ENCODE measurements at regions of chr12 and their contacts with region 1.

Region 1: GRCh38 chr12:49060237-49061156 is at the start of gene KMT2D:
- DNase-seq: peak; percentile 92
- ATAC-seq: peak; percentile 64
- H3K4me3 Mint-ChIP-seq: peak within 1 kb of the TSS; percentile 96
- H3K27ac Mint-ChIP-seq: peak within 1 kb of the TSS; percentile 92
- H3K4me1 Mint-ChIP-seq: peaks cover 47% of the 10 kb centered on the region
- H3K27me3 Mint-ChIP-seq: no peaks in the 10 kb centered on the region
- CTCF ChIP-seq: no peak
- total RNA-seq, gene KMT2D: 100 to 104 TPM (median 101 TPM) in 3 replicates

Region 2: GRCh38 chr12:48572326-48572725 is 488.2 kb before region 1 on chr12:
- CTCF ChIA-PET with region 1: no interaction called
- POLR2A ChIA-PET with region 1: no interaction called
- DNase-seq: no peak
- ATAC-seq: no peak
- H3K4me3 Mint-ChIP-seq: no peak overlapping the region
- H3K27ac Mint-ChIP-seq: no peak overlapping the region
- H3K4me1 Mint-ChIP-seq: no peaks in the 10 kb centered on the region
- H3K27me3 Mint-ChIP-seq: peaks cover 2% of the 10 kb centered on the region; the same call in 1 of the 2 replicates
- CTCF ChIP-seq: no peak

Region 3: GRCh38 chr12:49043856-49044258 is 16.6 kb before region 1 on chr12:
- CTCF ChIA-PET with region 1: interaction called, 23 read pairs
- POLR2A ChIA-PET with region 1: no interaction called
- DNase-seq: peak; percentile 91
- ATAC-seq: peak; percentile 86
- H3K4me3 Mint-ChIP-seq: no peak overlapping the region
- H3K27ac Mint-ChIP-seq: no peak overlapping the region
- H3K4me1 Mint-ChIP-seq: no peaks in the 10 kb centered on the region
- H3K27me3 Mint-ChIP-seq: no peaks in the 10 kb centered on the region
- CTCF ChIP-seq: peak; percentile 76

Region 4: GRCh38 chr12:49098035-49098451 is 37.5 kb after region 1 on chr12:
- CTCF ChIA-PET with region 1: interaction called, 64 read pairs
- POLR2A ChIA-PET with region 1: interaction called, 4 read pairs
- DNase-seq: peak; percentile 87
- ATAC-seq: peak; percentile 73
- H3K4me3 Mint-ChIP-seq: no peak overlapping the region
- H3K27ac Mint-ChIP-seq: no peak overlapping the region
- H3K4me1 Mint-ChIP-seq: peaks cover 21% of the 10 kb centered on the region
- H3K27me3 Mint-ChIP-seq: peaks cover 29% of the 10 kb centered on the region
- CTCF ChIP-seq: peak; percentile 92

Region 5: DNA sequence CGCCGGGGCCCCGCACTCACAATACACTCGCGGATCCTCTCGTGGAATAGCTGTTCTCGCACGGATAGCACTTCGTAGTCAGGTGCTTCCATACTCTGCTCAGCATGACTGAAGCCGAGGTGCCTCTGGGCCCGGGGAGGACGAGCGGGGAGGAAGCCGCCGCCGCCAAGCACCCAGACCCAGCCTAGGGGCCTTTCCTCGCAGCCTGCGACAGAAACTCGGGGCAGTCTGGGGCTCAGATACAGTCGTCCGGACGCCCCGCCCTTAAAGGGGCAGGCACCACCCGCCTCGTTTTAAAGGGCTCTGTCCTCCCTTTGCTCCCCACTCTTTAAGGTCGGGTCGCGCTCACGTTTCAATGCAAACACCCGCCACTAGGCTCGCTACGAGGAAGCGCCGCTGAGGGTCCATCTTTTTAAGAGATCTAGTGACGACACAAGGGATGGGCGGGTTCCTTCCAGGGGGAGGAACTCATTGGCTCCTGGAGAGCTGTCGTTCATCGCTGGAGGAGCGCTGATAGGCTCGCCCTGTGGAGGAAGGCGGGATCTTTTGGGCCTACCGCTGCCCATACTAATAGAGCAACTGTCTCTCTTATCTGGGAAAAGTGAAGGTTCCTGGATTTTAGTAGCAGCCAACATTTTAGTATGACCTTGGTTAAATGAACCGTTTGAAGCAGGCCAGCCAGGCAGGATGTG is 50.1 kb after region 1 on chr12 and contains the start of gene LMBR1L:
- CTCF ChIA-PET with region 1: interaction called, 18 read pairs
- POLR2A ChIA-PET with region 1: interaction called, 4 read pairs
- DNase-seq: peak; percentile 97
- ATAC-seq: peak; percentile 96
- H3K4me3 Mint-ChIP-seq: peak within 1 kb of the TSS; percentile 96
- H3K27ac Mint-ChIP-seq: peak within 1 kb of the TSS; percentile 98
- H3K4me1 Mint-ChIP-seq: peaks cover 29% of the 10 kb centered on the region
- H3K27me3 Mint-ChIP-seq: peaks cover 4% of the 10 kb centered on the region
- CTCF ChIP-seq: no peak
- total RNA-seq, gene LMBR1L: 52.8 to 78.2 TPM (median 53.1 TPM) in 3 replicates

Region 6: DNA sequence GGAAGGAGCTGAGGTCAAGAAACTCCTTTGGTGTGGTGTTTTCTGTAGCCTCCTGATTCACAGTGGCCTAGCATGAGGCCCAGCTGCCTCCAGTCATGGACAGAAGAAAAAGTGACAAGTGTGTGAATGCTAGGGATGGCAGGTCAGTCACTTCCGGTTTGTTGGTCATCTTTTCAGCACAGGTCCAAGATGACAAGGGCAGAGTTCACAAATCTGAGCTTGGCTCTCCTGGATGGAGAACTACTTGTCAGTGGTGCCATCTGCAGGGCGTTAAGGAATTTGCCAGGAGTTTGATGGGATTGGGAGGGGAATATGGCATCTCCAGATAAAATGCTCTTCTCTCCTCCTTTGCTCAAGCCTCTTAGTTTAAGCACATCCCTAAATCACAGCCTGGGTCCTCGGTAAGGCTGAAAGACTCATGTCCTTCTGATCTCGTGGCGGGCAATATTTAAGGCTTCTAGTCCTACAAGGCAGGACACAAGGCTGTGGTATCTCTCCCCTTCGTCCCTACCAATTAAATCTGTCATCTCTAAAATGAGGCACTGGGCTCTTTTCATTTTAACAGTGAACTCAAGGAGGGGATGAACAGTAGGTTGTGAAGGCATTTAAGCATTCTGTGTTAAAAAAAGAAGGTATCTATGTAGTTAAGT is 60.7 kb after region 1 on chr12:
- CTCF ChIA-PET with region 1: interaction called, 35 read pairs
- POLR2A ChIA-PET with region 1: no interaction called
- DNase-seq: peak; percentile 45
- ATAC-seq: peak; percentile 93
- H3K4me3 Mint-ChIP-seq: no peak overlapping the region
- H3K27ac Mint-ChIP-seq: no peak overlapping the region
- H3K4me1 Mint-ChIP-seq: no peaks in the 10 kb centered on the region
- H3K27me3 Mint-ChIP-seq: peaks cover 9% of the 10 kb centered on the region
- CTCF ChIP-seq: no peak

Region 7: GRCh38 chr12:49130151-49131050 is 69.9 kb after region 1 on chr12:
- CTCF ChIA-PET with region 1: interaction called, 24 read pairs
- POLR2A ChIA-PET with region 1: interaction called, 4 read pairs
- DNase-seq: peak; percentile 90
- ATAC-seq: peak; percentile 65
- H3K4me3 Mint-ChIP-seq: peak overlapping the region; percentile 90
- H3K27ac Mint-ChIP-seq: peak overlapping the region; percentile 99
- H3K4me1 Mint-ChIP-seq: peaks cover 19% of the 10 kb centered on the region
- H3K27me3 Mint-ChIP-seq: no peaks in the 10 kb centered on the region; the same call in 1 of the 2 replicates
- CTCF ChIP-seq: peak; percentile 64

Region 8: DNA sequence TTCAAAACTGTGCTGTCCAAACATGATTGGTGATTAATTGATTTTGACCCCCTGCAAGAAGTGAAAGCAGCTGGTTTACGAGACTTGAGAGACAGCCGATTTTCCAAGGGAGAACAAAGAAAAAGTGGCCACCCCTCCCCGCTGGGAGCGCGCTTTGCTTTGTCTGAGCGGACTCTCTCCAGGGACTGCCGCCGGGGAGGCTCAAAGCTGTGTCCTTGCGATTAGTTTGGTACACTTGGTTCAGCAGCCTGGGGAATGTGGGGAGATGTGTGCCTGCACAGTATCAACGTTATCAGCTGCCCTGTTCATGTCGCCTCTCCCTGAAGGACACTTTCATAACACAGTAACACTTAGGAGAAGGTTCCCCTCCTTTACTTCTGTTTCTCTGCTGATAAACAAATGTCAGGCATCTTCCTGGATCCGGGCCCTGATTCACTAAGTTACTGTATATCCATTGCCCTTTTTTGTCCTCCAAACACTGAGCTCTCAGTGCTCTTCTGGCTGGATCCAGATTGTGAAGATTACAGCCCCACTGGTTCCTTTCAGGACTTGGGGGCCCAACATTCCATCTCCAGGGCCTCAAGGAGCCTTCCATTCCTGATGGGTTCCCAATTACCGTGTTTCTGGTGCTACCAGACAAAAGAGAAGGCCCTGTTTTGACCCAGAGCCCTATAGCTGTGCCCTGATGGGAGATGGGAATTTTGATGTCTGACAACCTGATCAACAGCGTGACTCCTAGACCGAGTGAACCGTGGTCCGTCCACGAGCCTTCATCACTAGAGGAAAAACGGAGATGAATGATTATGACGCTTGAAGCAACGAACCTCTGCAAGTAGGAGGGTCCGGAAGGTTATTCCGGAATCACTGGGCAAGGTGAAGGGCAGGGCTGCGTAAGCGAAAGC is 172.7 kb after region 1 on chr12:
- CTCF ChIA-PET with region 1: interaction called, 11 read pairs
- POLR2A ChIA-PET with region 1: no interaction called
- DNase-seq: peak; percentile 62
- ATAC-seq: peak; percentile 34
- H3K4me3 Mint-ChIP-seq: peak overlapping the region; percentile 38
- H3K27ac Mint-ChIP-seq: no peak overlapping the region
- H3K4me1 Mint-ChIP-seq: peaks cover 27% of the 10 kb centered on the region
- H3K27me3 Mint-ChIP-seq: peaks cover 6% of the 10 kb centered on the region; the same call in 1 of the 2 replicates
- CTCF ChIP-seq: no peak